Heart right ventricle (tissue), 16 donors: ENCODE measurements at regions of chr3 and their contacts with region 1.

Region 1: GRCh38 chr3:16183601-16184270 is 9.3 kb downstream of the GALNT15 start:
- DNase-seq: no peak
- ATAC-seq: peak in 7 of 8 donors; percentile 29 to 68 (median 60)
- H3K4me3 ChIP-seq: no peak overlapping the region
- H3K27ac ChIP-seq: no peak overlapping the region
- H3K4me1 ChIP-seq: peaks cover 0 to 17% (median 1%) of the 10 kb centered on the region in 9 donors
- H3K27me3 ChIP-seq: no peaks in the 10 kb centered on the region
- CTCF ChIP-seq: no peak

Region 2: GRCh38 chr3:16247276-16248061 is 63.7 kb after region 1 on chr3:
- intact Hi-C with region 1: loop called in 8 of 10 experiments (anchors 2 to 10 kb)
- DNase-seq: peak; percentile 63 to 84
- ATAC-seq: peak; percentile 24 to 83 (median 72)
- H3K4me3 ChIP-seq: no peak overlapping the region
- H3K27ac ChIP-seq: no peak overlapping the region
- H3K4me1 ChIP-seq: peaks cover 0 to 27% (median 16%) of the 10 kb centered on the region in 9 donors
- H3K27me3 ChIP-seq: no peaks in the 10 kb centered on the region
- CTCF ChIP-seq: peak; percentile 85 to 98 (median 94)